ENCODE measurements at regions of chrX and their contacts with region 1.

Region 1: GRCh38 chrX:153190381-153190780 is 11.3 kb downstream of the MAGEA1 start:
- DNase-seq: no peak
- ATAC-seq: no peak
- H3K4me3 ChIP-seq: no peak overlapping the region
- H3K27ac ChIP-seq: no peak overlapping the region
- H3K4me1 ChIP-seq: no peaks in the 10 kb centered on the region
- H3K27me3 ChIP-seq: no peaks in the 10 kb centered on the region
- CTCF ChIP-seq: no peak
- EP300 ChIP-seq: no peak
- POLR2A ChIP-seq: no peak
- RAD21 ChIP-seq: no peak

Region 2: DNA sequence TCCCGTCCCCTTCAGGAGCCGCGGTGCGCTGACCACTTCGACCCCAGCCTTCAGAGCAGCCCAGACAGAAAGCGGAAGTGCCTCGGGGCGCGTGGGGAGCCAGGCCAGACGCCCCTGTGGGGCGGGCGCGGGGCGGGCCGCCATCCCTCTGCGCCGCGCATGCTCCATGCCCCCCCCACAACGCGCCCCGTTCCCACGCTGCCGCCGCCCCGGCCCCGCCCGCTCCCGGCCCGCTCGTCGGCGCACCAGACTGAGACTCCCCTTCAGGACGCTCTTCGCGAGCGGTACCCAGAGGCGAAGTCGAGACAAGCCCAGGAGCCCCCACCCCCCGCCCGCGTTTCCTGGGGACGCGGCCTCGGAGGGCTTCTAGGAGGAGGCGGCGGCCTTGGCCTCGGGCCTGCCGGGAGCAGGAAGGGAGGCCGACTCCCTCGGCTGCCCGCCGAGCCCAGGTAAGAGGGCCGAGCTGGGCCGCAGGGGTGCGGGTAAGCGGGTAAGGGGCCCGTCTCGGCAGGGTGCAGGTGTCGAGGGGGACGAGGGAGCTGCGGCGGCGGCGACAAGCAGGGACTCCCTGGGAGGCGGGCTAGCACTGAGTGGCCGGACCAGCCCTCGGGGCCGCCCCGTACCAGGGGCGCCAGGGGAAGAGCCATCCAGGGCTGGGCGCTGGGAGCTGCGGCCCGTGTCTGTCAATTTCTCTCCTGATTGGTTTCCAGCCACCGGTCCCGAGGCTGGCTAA is 221.0 kb after region 1 on chrX and contains the start of gene ZFP92:
- CTCF ChIA-PET with region 1: no interaction called
- POLR2A ChIA-PET with region 1: no interaction called
- RAD21 ChIA-PET with region 1: no interaction called
- SMC1A ChIA-PET with region 1: no interaction called
- in situ Hi-C with region 1: no loop called
- intact Hi-C with region 1: no loop called
- DNase-seq: no peak
- ATAC-seq: peak; percentile 92
- H3K4me3 ChIP-seq: peak within 1 kb of the TSS; percentile 71
- H3K27ac ChIP-seq: no peak within 1 kb of the TSS
- H3K4me1 ChIP-seq: no peaks in the 10 kb centered on the region
- H3K27me3 ChIP-seq: no peaks in the 10 kb centered on the region
- CTCF ChIP-seq: no peak
- EP300 ChIP-seq: no peak
- POLR2A ChIP-seq: peak; percentile 35; the same call in 1 of the 2 replicates
- RAD21 ChIP-seq: no peak
- polyA plus RNA-seq, gene ZFP92: 0.02 to 0.03 TPM

Region 3: DNA sequence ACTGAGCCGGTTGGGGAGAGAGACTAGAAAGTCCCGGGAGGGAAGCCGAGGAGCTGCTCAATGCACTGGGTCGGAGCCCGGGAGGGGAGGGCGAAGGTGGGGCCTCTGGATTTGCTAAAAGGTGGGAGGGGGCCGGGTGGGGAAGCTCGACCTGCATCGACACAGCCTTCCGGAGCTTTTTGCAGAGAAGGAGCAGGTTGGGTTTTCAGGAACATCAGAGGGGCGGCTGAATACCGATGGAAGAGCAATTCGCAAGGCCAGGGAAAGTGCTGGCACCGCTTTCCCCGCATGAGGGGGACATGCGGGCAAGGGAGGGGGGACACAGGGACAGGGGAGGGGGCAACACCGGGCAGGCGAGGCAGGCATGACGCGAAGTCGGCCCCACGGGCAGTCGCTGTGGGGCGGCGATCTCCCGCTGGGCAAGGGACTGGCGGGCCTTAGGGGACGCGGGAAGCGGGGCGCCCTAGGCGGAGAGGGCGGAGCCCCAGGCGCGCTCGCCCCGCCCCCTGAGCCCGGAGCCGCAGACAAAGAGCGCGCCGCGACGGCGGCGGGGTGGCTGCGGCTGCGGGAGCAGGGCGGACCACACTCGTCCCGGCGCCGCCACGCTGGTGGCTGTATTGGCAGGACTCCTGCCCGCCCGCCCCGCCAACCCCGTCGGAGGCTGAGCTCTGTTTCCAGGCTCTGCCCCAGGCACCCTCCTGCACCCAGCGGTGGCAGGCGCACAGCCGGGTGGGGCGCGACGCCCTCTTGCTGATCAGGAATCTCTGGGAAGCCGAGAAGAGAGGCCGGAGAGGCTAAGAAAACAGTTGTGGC is 628.4 kb after region 1 on chrX:
- CTCF ChIA-PET with region 1: no interaction called
- POLR2A ChIA-PET with region 1: no interaction called
- RAD21 ChIA-PET with region 1: no interaction called
- SMC1A ChIA-PET with region 1: no interaction called
- in situ Hi-C with region 1: loop called (anchors 25 kb)
- intact Hi-C with region 1: no loop called
- DNase-seq: no peak
- ATAC-seq: peak; percentile 78
- H3K4me3 ChIP-seq: no peak overlapping the region
- H3K27ac ChIP-seq: no peak overlapping the region
- H3K4me1 ChIP-seq: no peaks in the 10 kb centered on the region
- H3K27me3 ChIP-seq: no peaks in the 10 kb centered on the region; a peak in 1 of 4 replicates
- CTCF ChIP-seq: no peak
- EP300 ChIP-seq: no peak
- POLR2A ChIP-seq: no peak
- RAD21 ChIP-seq: no peak

Region 4: GRCh38 chrX:154967603-154968002 is 1777.2 kb after region 1 on chrX:
- CTCF ChIA-PET with region 1: no interaction called
- POLR2A ChIA-PET with region 1: no interaction called
- RAD21 ChIA-PET with region 1: no interaction called
- SMC1A ChIA-PET with region 1: no interaction called
- in situ Hi-C with region 1: no loop called
- intact Hi-C with region 1: no loop called
- DNase-seq: no peak
- ATAC-seq: no peak
- H3K4me3 ChIP-seq: no peak overlapping the region
- H3K27ac ChIP-seq: no peak overlapping the region
- H3K4me1 ChIP-seq: no peaks in the 10 kb centered on the region
- H3K27me3 ChIP-seq: no peaks in the 10 kb centered on the region
- CTCF ChIP-seq: no peak
- EP300 ChIP-seq: no peak
- POLR2A ChIP-seq: no peak
- RAD21 ChIP-seq: no peak